B cell (primary cell): ENCODE measurements at regions of chr7 and their contacts with region 1.

Region 1: GRCh38 chr7:106542550-106543220 is 118.3 kb downstream of the CCDC71L start:
- DNase-seq: peak; percentile 71
- ATAC-seq: peak; percentile 84
- H3K4me3 ChIP-seq: no peak overlapping the region
- H3K4me3 Mint-ChIP-seq: no peak overlapping the region
- H3K27ac ChIP-seq: no peak overlapping the region
- H3K27ac Mint-ChIP-seq: no peak overlapping the region
- H3K4me1 ChIP-seq: peaks cover 0 to 3% of the 10 kb centered on the region in 2 donors
- H3K4me1 Mint-ChIP-seq: peaks cover 4% of the 10 kb centered on the region
- H3K27me3 ChIP-seq: no peaks in the 10 kb centered on the region
- H3K27me3 Mint-ChIP-seq: peaks cover 3% of the 10 kb centered on the region
- CTCF ChIP-seq: peak; percentile 78

Region 2: DNA sequence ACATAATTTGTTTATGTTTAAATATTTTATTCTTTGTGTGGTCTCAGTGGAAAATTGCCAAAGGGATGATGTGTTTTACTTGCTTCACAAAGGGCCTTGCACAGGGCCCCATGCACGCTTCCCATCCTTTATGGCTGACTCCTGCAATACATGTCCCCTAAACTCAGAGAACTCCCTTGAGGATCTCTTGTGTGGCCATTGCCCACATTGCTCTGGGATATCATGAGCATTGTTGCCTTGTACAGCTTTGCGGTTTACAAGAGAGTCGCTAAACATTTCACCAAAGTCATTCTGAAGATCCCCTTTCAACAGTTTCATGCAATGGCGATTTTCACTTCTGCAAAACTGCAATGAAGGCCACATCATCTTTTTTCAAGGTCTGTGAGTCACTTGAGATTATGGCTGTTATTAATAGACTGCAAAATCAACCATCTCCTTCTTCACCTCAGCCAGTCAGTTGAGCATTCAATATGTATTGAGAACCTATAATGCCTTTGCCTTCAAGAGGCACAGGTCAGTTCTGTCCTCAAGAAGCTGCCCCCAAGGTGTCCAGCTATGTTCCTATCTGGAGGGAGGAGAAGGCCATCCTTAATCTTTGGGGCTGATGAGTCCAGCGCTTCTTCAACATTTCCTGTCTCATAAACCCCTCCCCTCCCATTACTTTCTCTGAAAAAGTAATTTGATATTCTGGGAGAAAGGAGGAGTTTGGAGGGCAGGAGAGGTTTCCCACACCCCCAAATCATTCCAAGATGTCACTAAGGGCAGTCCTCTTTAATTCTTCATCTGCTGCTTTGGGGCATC is 10.2 kb after region 1 on chr7:
- CTCF ChIA-PET with region 1: interaction called, 25 read pairs
- POLR2A ChIA-PET with region 1: no interaction called
- intact Hi-C with region 1: no loop called
- DNase-seq: peak; percentile 84
- ATAC-seq: peak; percentile 91
- H3K4me3 ChIP-seq: no peak overlapping the region
- H3K4me3 Mint-ChIP-seq: peak overlapping the region; percentile 40
- H3K27ac ChIP-seq: peak overlapping the region in 1 of 2 donors; percentile 23
- H3K27ac Mint-ChIP-seq: peak overlapping the region; percentile 73
- H3K4me1 ChIP-seq: peaks cover 18 to 20% of the 10 kb centered on the region in 2 donors
- H3K4me1 Mint-ChIP-seq: peaks cover 31% of the 10 kb centered on the region
- H3K27me3 ChIP-seq: no peaks in the 10 kb centered on the region
- H3K27me3 Mint-ChIP-seq: no peaks in the 10 kb centered on the region
- CTCF ChIP-seq: no peak

Region 3: GRCh38 chr7:106731187-106731586 is 188.5 kb after region 1 on chr7:
- CTCF ChIA-PET with region 1: interaction called, 179 read pairs
- POLR2A ChIA-PET with region 1: interaction called, 8 read pairs
- intact Hi-C with region 1: loop called (anchors 1 kb)
- DNase-seq: peak; percentile 76
- ATAC-seq: peak; percentile 83
- H3K4me3 ChIP-seq: peak overlapping the region in 1 of 5 experiments; percentile 26
- H3K4me3 Mint-ChIP-seq: peak overlapping the region; percentile 64
- H3K27ac ChIP-seq: peak overlapping the region; percentile 8 to 10
- H3K27ac Mint-ChIP-seq: peak overlapping the region; percentile 64
- H3K4me1 ChIP-seq: peaks cover 26 to 28% of the 10 kb centered on the region in 2 donors
- H3K4me1 Mint-ChIP-seq: peaks cover 28% of the 10 kb centered on the region
- H3K27me3 ChIP-seq: no peaks in the 10 kb centered on the region
- H3K27me3 Mint-ChIP-seq: no peaks in the 10 kb centered on the region
- CTCF ChIP-seq: no peak